IMR-90 (cell line): ENCODE measurements at regions of chr5 and their contacts with region 1.

Region 1: GRCh38 chr5:39424736-39425637 is at the start of gene DAB2:
- DNase-seq: peak; percentile 96
- ATAC-seq: peak; percentile 77
- H3K4me3 ChIP-seq: peak within 1 kb of the TSS; percentile 99
- H3K27ac ChIP-seq: peak within 1 kb of the TSS; percentile 89
- H3K4me1 ChIP-seq: peaks cover 18% of the 10 kb centered on the region
- H3K27me3 ChIP-seq: no peaks in the 10 kb centered on the region
- CTCF ChIP-seq: peak; percentile 78
- POLR2A ChIP-seq: peak; percentile 98
- RAD21 ChIP-seq: peak; percentile 61
- total RNA-seq, gene DAB2: 50.0 and 97.2 TPM in 2 replicates

Region 2: GRCh38 chr5:39376293-39376714 is 48.7 kb before region 1 on chr5:
- CTCF ChIA-PET with region 1: interaction called, 14 read pairs
- POLR2A ChIA-PET with region 1: interaction called, 6 read pairs
- dilution Hi-C with region 1: no loop called
- in situ Hi-C with region 1: no loop called
- intact Hi-C with region 1: loop called (anchors 2 kb)
- DNase-seq: peak; percentile 48
- ATAC-seq: peak; percentile 49
- H3K4me3 ChIP-seq: no peak overlapping the region
- H3K27ac ChIP-seq: no peak overlapping the region
- H3K4me1 ChIP-seq: peaks cover 6% of the 10 kb centered on the region; the same call in 1 of the 2 replicates
- H3K27me3 ChIP-seq: no peaks in the 10 kb centered on the region
- CTCF ChIP-seq: peak; percentile 72
- POLR2A ChIP-seq: 0 out of 2 replicates have a peak, but pooled peaks have one; percentile 2
- RAD21 ChIP-seq: peak; percentile 74

Region 3: GRCh38 chr5:39475881-39476842 is 51.2 kb after region 1 on chr5:
- CTCF ChIA-PET with region 1: interaction called, 5 read pairs
- POLR2A ChIA-PET with region 1: interaction called, 9 read pairs
- dilution Hi-C with region 1: no loop called
- in situ Hi-C with region 1: no loop called
- intact Hi-C with region 1: loop called (anchors 1 kb)
- DNase-seq: peak; percentile 86
- ATAC-seq: peak; percentile 42
- H3K4me3 ChIP-seq: no peak overlapping the region
- H3K27ac ChIP-seq: peak overlapping the region; percentile 87; the same call in 1 of the 2 replicates
- H3K4me1 ChIP-seq: peaks cover 11% of the 10 kb centered on the region
- H3K27me3 ChIP-seq: no peaks in the 10 kb centered on the region
- CTCF ChIP-seq: no peak; the same call in 1 of the 2 replicates
- POLR2A ChIP-seq: no peak
- RAD21 ChIP-seq: no peak

Region 4: GRCh38 chr5:39520232-39520572 is 95.2 kb after region 1 on chr5:
- CTCF ChIA-PET with region 1: interaction called, 12 read pairs
- POLR2A ChIA-PET with region 1: interaction called, 11 read pairs
- dilution Hi-C with region 1: no loop called
- in situ Hi-C with region 1: no loop called
- intact Hi-C with region 1: loop called (anchors 1 kb)
- DNase-seq: peak; percentile 95
- ATAC-seq: peak; percentile 22
- H3K4me3 ChIP-seq: no peak overlapping the region
- H3K27ac ChIP-seq: peak overlapping the region; percentile 83; the same call in 1 of the 2 replicates
- H3K4me1 ChIP-seq: peaks cover 14% of the 10 kb centered on the region
- H3K27me3 ChIP-seq: no peaks in the 10 kb centered on the region
- CTCF ChIP-seq: no peak
- POLR2A ChIP-seq: no peak
- RAD21 ChIP-seq: no peak

Region 5: GRCh38 chr5:39570403-39571027 is 145.5 kb after region 1 on chr5:
- CTCF ChIA-PET with region 1: interaction called, 3 read pairs
- POLR2A ChIA-PET with region 1: interaction called, 5 read pairs
- dilution Hi-C with region 1: no loop called
- in situ Hi-C with region 1: no loop called
- intact Hi-C with region 1: loop called (anchors 5 kb)
- DNase-seq: peak; percentile 61
- ATAC-seq: peak; percentile 79
- H3K4me3 ChIP-seq: no peak overlapping the region
- H3K27ac ChIP-seq: no peak overlapping the region
- H3K4me1 ChIP-seq: no peaks in the 10 kb centered on the region
- H3K27me3 ChIP-seq: peaks cover 13% of the 10 kb centered on the region
- CTCF ChIP-seq: peak; percentile 79
- POLR2A ChIP-seq: no peak
- RAD21 ChIP-seq: peak; percentile 82